Mammary epithelial cell (primary cell): ENCODE measurements at regions of chr5 and their contacts with region 1.

Region 1: GRCh38 chr5:68365889-68366288 is 150.3 kb downstream of the PIK3R1 start:
- DNase-seq: no peak
- H3K4me3 ChIP-seq: no peak overlapping the region
- H3K27ac ChIP-seq: no peak overlapping the region
- H3K4me1 ChIP-seq: peaks cover 21% of the 10 kb centered on the region
- H3K27me3 ChIP-seq: no peaks in the 10 kb centered on the region
- CTCF ChIP-seq: no peak

Region 2: DNA sequence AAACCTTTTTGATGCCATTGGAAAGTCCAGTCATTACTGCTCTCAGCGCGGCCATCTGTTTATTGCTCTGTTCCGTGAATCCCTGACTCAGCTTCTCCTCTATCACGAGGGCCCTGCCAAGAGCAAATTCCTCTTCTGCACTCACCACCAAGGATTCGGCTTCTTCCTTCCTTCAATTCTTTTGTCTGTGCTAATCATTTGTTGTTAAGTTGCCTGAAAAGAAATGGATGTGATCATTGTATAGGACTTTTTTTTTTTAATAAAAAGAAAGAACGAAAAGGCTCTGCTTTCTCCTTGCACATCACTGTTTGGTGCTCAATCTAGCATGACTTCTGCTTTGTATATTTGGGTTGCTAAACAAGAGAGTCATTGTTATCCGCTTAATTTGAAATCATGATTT is 279.0 kb before region 1 on chr5:
- CTCF ChIA-PET with region 1: no interaction called
- dilution Hi-C with region 1: no loop called
- in situ Hi-C with region 1: no loop called
- intact Hi-C with region 1: no loop called
- DNase-seq: no peak
- H3K4me3 ChIP-seq: no peak overlapping the region
- H3K27ac ChIP-seq: no peak overlapping the region
- H3K4me1 ChIP-seq: no peaks in the 10 kb centered on the region
- H3K27me3 ChIP-seq: no peaks in the 10 kb centered on the region
- CTCF ChIP-seq: no peak

Region 3: GRCh38 chr5:68353605-68354004 is 12.3 kb before region 1 on chr5:
- CTCF ChIA-PET with region 1: no interaction called
- dilution Hi-C with region 1: no loop called
- in situ Hi-C with region 1: no loop called
- intact Hi-C with region 1: loop called (anchors 2 kb)
- DNase-seq: no peak
- H3K4me3 ChIP-seq: no peak overlapping the region
- H3K27ac ChIP-seq: no peak overlapping the region
- H3K4me1 ChIP-seq: no peaks in the 10 kb centered on the region
- H3K27me3 ChIP-seq: no peaks in the 10 kb centered on the region
- CTCF ChIP-seq: no peak